Stomach (tissue), 19 donors: ENCODE measurements at regions of chr17 and their contacts with region 1.

Region 1: DNA sequence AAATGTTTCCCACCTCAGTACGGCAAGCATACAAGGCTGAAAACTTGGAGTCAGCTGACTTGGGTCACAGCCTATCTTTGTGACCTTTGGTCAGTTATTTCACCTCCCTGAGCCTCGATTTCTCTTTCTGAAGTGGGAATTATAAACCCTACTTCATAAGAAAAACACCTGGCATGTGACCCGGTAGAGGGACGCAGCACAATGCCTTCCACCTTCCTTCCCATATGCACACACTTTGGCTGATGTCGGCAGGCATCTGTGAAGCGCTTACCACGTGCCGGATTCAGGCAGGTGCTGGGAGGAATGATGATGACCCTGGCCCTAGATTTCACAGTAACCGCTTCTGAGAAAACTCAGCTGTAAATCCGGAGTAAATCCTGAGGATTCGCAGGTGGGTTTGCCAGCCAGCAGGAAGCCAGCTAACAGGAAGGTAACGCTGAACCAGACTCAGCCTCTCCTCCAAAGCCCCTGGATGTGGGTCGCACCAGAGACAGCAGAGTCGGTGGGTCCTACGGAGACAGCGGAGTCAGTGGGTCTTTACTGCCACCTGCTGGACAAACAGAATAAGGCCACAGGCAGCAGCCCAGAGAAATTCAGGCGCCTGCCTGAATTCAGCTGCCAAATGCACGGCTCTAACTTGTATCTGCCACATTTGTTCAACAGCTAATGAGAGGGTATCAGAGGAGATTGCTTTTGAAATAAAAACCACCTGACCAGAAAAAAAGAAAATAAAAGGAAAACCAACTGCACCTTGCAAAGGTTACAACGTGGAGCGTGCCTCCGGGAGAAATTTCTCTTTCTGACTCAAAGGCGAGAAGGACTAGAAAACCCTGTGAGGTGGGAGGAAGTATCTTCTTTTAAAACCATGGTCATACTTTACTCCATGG is 16.6 kb downstream of the COPRS start:
- DNase-seq: peak; percentile 75 to 93
- H3K4me3 ChIP-seq: peak overlapping the region; percentile 7 to 22 (median 18)
- H3K27ac ChIP-seq: peak overlapping the region; percentile 25 to 69 (median 57)
- H3K4me1 ChIP-seq: peaks cover 16 to 29% (median 20%) of the 10 kb centered on the region in 4 donors
- H3K27me3 ChIP-seq: no peaks in the 10 kb centered on the region
- CTCF ChIP-seq: peak in 6 of 7 experiments; percentile 77 to 99 (median 96)
- EP300 ChIP-seq: no peak
- POLR2A ChIP-seq: no peak

Region 2: GRCh38 chr17:31433091-31433790 is 409.2 kb before region 1 on chr17:
- intact Hi-C with region 1: loop called (anchors 10 kb)
- DNase-seq: no peak
- H3K4me3 ChIP-seq: no peak overlapping the region
- H3K27ac ChIP-seq: no peak overlapping the region
- H3K4me1 ChIP-seq: peaks cover 0 to 8% (median 7%) of the 10 kb centered on the region in 4 donors
- H3K27me3 ChIP-seq: peaks cover 0 to 63% (median 6%) of the 10 kb centered on the region in 3 donors
- CTCF ChIP-seq: no peak
- EP300 ChIP-seq: no peak
- POLR2A ChIP-seq: no peak

Region 3: DNA sequence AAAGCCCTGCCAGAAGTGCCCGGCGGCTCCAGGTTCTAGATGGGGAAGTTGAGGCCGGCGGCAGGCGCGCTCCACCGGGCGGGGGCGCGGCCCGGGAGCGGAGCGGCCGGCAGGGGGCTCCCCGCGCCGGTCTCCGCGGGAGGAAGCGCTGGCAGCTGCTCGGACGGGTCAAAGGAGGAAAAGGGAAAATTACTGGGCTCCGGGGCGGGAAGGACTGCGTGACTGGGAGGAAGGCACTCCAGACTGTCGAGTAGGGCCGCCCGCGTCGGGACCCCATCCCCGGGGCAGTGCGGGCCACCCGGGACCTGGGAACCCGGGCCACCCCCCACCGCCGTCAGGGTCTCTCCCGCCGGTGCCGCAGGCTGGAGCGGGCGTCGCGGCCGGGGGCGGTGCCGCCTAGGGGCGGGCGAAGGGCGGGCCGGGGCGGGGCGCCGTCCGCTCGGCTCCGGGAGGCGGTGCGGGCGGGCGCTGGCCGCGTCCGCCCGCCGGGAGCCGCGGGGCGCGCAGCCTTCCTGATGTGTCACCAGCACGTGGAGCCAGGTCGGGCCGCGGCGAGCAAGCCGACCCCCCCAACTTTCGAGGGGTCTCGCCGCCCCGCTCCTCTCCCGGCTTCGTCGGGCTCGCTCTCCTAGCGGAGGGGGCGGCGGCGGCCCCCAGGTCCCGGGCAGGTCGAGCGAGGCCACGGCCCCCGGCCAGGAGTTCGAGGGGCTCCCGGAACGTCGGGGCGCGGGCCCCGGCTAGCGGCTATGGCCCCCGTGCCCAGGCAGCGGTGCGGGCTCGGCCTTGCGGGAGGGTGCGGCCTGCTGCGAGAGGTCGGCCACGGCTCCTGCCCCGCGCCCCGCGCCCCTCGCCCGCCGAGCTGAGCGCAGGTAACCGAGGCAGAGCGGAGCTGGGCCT is 283.4 kb before region 1 on chr17:
- intact Hi-C with region 1: loop called (anchors 5 kb)
- DNase-seq: peak; percentile 79 to 92
- H3K4me3 ChIP-seq: peak overlapping the region; percentile 56 to 81 (median 74)
- H3K27ac ChIP-seq: peak overlapping the region; percentile 89 to 95 (median 92)
- H3K4me1 ChIP-seq: peaks cover 41 to 53% (median 51%) of the 10 kb centered on the region in 4 donors
- H3K27me3 ChIP-seq: no peaks in the 10 kb centered on the region
- CTCF ChIP-seq: peak in 5 of 7 experiments; percentile 19 to 94 (median 85)
- EP300 ChIP-seq: no peak
- POLR2A ChIP-seq: no peak